ENCODE measurements at regions of chr2 and their contacts with region 1.

Region 1: DNA sequence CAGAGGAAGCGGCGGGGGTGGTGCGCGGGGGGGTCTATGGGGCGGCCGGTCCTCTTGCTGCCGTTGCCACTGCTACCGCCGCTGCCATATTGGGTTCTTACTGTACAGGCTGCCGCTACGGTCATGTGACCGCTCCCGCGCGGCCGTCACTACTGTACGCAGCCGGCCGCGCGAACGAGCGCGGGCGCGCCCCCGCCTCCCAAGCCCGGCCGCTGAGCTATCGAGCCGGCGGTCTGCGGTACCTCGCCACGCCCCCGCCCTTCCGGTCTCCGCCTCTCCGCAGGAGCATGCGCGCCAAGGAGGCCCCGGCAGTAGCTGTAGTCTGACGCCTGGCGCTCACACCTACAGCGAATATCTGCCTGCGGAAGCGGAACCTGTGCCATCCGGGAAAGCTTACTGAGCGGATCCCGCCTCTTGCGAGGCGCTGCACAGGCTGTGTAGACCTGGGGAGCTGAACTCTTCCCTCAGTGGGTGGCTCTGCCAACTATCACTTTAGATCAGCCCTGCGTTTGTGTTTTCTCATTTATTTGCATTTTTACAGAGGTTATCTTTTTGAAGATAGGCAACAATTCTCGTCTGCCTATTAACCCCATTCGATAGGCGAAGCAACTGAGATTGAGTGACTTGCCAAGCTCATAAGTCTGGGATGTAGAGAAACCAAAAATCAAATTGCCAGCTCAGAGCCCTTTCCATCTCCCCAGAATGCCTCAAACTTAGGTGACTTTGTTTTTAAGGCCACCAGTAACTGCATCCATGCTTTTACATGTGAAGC is at the start of gene ASXL2:
- DNase-seq: peak; percentile 95 to 98 (median 98)
- ATAC-seq: peak; percentile 95
- H3K4me3 ChIP-seq: peak within 1 kb of the TSS; percentile 94
- H3K4me3 Mint-ChIP-seq: peak within 1 kb of the TSS; percentile 91 to 98 (median 97)
- H3K27ac ChIP-seq: peak within 1 kb of the TSS; percentile 99
- H3K27ac Mint-ChIP-seq: peak within 1 kb of the TSS; percentile 93 to 99 (median 99)
- H3K4me1 ChIP-seq: peaks cover 16 to 21% of the 10 kb centered on the region in 2 donors
- H3K4me1 Mint-ChIP-seq: peaks cover 31 to 50% (median 40%) of the 10 kb centered on the region in 7 donors
- H3K27me3 ChIP-seq: no peaks in the 10 kb centered on the region
- H3K27me3 Mint-ChIP-seq: no peaks in the 10 kb centered on the region
- total RNA-seq, gene ASXL2: 29.2 to 62.1 (median 48.5) TPM

Region 2: GRCh38 chr2:24792874-24793760 is 1085.4 kb before region 1 on chr2 and contains the starts of genes CENPO and PTRHD1:
- CTCF ChIA-PET with region 1: no interaction called
- POLR2A ChIA-PET with region 1: no interaction called
- intact Hi-C with region 1: loop called (anchors 2 to 5 kb)
- DNase-seq: peak; percentile 93 to 99 (median 97)
- ATAC-seq: peak; percentile 98
- H3K4me3 ChIP-seq: peak within 1 kb of the TSS; percentile 97
- H3K4me3 Mint-ChIP-seq: peak within 1 kb of the TSS; percentile 95 to 100 (median 98)
- H3K27ac ChIP-seq: peak within 1 kb of the TSS; percentile 96
- H3K27ac Mint-ChIP-seq: peak within 1 kb of the TSS; percentile 99 to 100 (median 99)
- H3K4me1 ChIP-seq: peaks cover 6 to 10% of the 10 kb centered on the region in 2 donors
- H3K4me1 Mint-ChIP-seq: peaks cover 5 to 53% (median 20%) of the 10 kb centered on the region in 7 donors
- H3K27me3 ChIP-seq: no peaks in the 10 kb centered on the region
- H3K27me3 Mint-ChIP-seq: no peaks in the 10 kb centered on the region
- total RNA-seq, gene CENPO: 3.6 to 36.6 (median 6.0) TPM
- total RNA-seq, gene PTRHD1: 14.3 to 31.5 (median 17.1) TPM

Region 3: GRCh38 chr2:25673300-25674076 is 205.1 kb before region 1 on chr2 and contains the start of gene DTNB:
- CTCF ChIA-PET with region 1: no interaction called
- POLR2A ChIA-PET with region 1: interaction called, 20 read pairs
- intact Hi-C with region 1: loop called (anchors 1 kb)
- DNase-seq: peak; percentile 68 to 82 (median 79)
- ATAC-seq: peak; percentile 89
- H3K4me3 ChIP-seq: peak within 1 kb of the TSS; percentile 94
- H3K4me3 Mint-ChIP-seq: peak within 1 kb of the TSS; percentile 84 to 90 (median 88)
- H3K27ac ChIP-seq: peak within 1 kb of the TSS; percentile 80
- H3K27ac Mint-ChIP-seq: peak within 1 kb of the TSS; percentile 74 to 92 (median 84)
- H3K4me1 ChIP-seq: peaks cover 12 to 15% of the 10 kb centered on the region in 2 donors
- H3K4me1 Mint-ChIP-seq: peaks cover 15 to 56% (median 37%) of the 10 kb centered on the region in 7 donors
- H3K27me3 ChIP-seq: no peaks in the 10 kb centered on the region
- H3K27me3 Mint-ChIP-seq: peaks cover 0 to 25% (median 0%) of the 10 kb centered on the region in 5 donors
- total RNA-seq, gene DTNB: 32.8 to 56.2 (median 33.8) TPM

Region 4: DNA sequence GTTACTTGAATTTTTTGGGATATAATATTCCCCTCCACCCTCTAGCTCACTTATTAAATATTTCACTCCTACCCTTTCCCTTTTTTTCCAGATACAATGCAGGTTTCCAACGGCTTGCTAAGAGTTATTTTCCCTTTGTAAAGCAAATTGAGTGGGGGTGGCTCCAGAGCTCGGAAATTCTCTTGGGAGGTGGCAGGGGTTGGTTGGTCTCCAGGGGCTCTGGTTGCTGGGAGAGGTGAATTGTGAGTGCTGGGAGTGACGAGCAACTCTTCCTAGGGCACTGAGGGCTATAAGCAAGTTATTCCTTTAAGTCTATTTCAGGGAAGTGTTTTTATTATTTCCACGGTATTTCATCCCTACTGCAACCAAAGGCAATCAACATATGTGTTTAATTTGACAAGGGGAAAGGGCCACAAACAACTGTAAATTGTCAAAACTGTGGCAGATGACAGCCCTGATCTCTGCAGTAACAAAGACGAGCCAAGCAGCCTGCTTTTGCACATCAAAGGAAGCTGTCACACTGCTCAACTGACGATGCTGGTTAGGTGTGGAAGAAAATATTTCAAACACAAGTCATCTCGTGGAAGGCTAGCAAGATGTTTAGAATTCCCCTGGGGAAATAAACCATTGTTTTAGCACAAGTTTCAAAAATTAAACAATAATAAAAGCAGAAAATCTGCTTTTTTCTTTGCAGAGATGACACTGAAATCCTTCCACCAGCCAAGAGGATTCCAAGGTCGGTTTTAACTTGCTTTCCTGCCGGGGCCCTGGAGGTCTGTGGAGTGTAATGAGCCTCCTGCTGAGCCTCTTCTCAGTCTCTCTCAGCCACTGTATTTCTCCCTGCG is 34.5 kb after region 1 on chr2:
- CTCF ChIA-PET with region 1: interaction called, 3 read pairs
- POLR2A ChIA-PET with region 1: interaction called, 9 read pairs
- intact Hi-C with region 1: loop called (anchors 1 to 2 kb)
- DNase-seq: peak in 4 of 9 donors; percentile 6 to 25 (median 12)
- ATAC-seq: no peak
- H3K4me3 ChIP-seq: no peak overlapping the region
- H3K4me3 Mint-ChIP-seq: peak overlapping the region in 1 of 10 donors; percentile 23
- H3K27ac ChIP-seq: no peak overlapping the region
- H3K27ac Mint-ChIP-seq: no peak overlapping the region
- H3K4me1 ChIP-seq: no peaks in the 10 kb centered on the region
- H3K4me1 Mint-ChIP-seq: peaks cover 7 to 25% (median 18%) of the 10 kb centered on the region in 7 donors
- H3K27me3 ChIP-seq: no peaks in the 10 kb centered on the region
- H3K27me3 Mint-ChIP-seq: no peaks in the 10 kb centered on the region

Region 5: DNA sequence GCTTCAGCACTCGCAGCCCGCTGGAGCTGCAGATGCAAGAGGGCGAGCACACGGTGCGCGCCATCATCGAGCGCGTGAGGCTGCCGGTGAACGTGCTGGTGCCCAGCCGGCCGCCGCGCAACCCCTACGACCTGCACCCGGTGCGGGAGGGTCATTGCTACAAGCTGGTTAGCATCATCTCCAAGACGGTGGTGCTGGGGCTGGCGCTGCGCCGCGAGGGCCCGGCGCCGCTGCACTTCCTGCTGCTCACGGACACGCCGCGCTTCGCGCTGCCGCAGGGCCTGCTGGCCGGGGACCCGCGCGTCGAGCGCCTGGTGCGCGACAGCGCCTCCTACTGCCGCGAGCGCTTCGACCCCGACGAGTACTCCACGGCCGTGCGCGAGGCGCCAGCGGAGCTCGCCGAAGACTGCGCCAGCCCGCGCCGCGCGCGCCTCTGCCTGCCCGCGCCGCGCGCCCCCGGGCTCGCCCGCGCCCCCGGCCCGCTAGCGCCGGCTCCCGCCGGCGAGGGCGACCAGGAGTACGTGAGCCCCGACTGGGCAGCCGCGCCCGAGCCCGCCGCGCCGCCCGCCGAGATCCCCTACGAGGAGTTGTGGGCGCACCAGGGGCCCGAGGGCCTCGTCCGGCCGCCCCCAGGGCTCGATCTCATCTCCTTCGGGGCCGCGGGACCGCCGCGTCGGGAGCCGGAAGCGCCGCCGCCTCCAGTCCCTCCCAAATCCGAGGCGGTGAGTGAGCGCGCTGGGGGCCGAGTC is 306.2 kb after region 1 on chr2:
- CTCF ChIA-PET with region 1: no interaction called
- POLR2A ChIA-PET with region 1: interaction called, 5 read pairs
- intact Hi-C with region 1: loop called (anchors 1 kb)
- DNase-seq: peak; percentile 82 to 91 (median 88)
- ATAC-seq: peak; percentile 98
- H3K4me3 ChIP-seq: peak overlapping the region; percentile 68
- H3K4me3 Mint-ChIP-seq: peak overlapping the region; percentile 79 to 91 (median 85)
- H3K27ac ChIP-seq: peak overlapping the region; percentile 71
- H3K27ac Mint-ChIP-seq: peak overlapping the region in 7 of 9 donors; percentile 25 to 90 (median 67)
- H3K4me1 ChIP-seq: peaks cover 5 to 8% of the 10 kb centered on the region in 2 donors
- H3K4me1 Mint-ChIP-seq: peaks cover 6 to 30% (median 23%) of the 10 kb centered on the region in 7 donors
- H3K27me3 ChIP-seq: no peaks in the 10 kb centered on the region
- H3K27me3 Mint-ChIP-seq: peaks cover 11 to 23% (median 15%) of the 10 kb centered on the region in 5 donors

Region 6: DNA sequence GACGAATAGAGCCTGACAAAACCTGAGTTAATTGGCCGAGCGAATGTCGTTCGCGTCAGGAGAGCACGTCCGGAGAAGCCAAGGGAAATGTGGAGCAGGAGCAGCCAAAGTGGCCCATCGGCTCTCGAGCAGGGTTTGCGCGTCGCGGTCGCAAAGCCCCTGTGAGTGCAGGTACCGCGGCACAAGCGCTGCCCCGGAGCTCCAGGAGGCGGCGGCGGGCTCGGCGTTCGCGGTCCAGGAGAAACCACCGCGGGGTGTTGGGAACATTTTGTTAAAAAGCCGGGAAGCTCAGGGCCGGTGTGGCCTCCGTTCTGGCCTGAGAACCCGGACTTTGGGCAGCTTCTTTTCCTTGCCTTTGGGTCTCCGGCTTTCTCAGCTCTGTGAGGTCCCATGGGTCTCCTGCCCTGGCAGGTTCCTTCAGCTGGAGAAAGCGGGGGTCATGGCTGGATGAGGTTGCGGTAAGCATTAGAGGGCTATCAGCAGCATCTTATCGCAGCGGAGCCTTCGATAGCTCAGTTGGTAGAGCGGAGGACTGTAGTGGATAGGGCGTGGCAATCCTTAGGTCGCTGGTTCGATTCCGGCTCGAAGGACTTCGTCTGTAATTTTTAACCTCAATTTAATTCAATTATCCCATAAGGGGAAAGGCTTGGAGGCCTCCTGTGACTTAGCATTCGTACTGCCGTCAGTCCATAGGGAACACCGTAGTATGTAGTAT is 1171.9 kb after region 1 on chr2:
- CTCF ChIA-PET with region 1: no interaction called
- POLR2A ChIA-PET with region 1: no interaction called
- intact Hi-C with region 1: loop called in 1 of 2 experiments (anchors 5 kb)
- DNase-seq: peak; percentile 77 to 95 (median 94)
- ATAC-seq: peak; percentile 76
- H3K4me3 ChIP-seq: peak overlapping the region; percentile 99
- H3K4me3 Mint-ChIP-seq: peak overlapping the region; percentile 86 to 100 (median 99)
- H3K27ac ChIP-seq: peak overlapping the region; percentile 84
- H3K27ac Mint-ChIP-seq: peak overlapping the region; percentile 96 to 100 (median 100)
- H3K4me1 ChIP-seq: peaks cover 8 to 15% of the 10 kb centered on the region in 2 donors
- H3K4me1 Mint-ChIP-seq: peaks cover 10 to 34% (median 19%) of the 10 kb centered on the region in 7 donors
- H3K27me3 ChIP-seq: no peaks in the 10 kb centered on the region
- H3K27me3 Mint-ChIP-seq: peaks cover 0 to 8% (median 4%) of the 10 kb centered on the region in 5 donors

Measured in naive thymus-derived CD4-positive, alpha-beta T cell (primary cell).